HCT116 (cell line): ENCODE measurements at regions of chr2 and their contacts with region 1.

Region 1: GRCh38 chr2:106104332-106105062 is 89.6 kb downstream of the UXS1 start:
- DNase-seq: peak; percentile 44
- ATAC-seq: peak; percentile 93
- H3K4me3 ChIP-seq: no peak overlapping the region
- H3K27ac ChIP-seq: no peak overlapping the region
- H3K4me1 ChIP-seq: peaks cover 0 to 7% of the 10 kb centered on the region in 2 experiments; a peak in 1 of 4 replicates
- H3K27me3 ChIP-seq: no peaks in the 10 kb centered on the region
- CTCF ChIP-seq: peak; percentile 85 to 91 (median 91)
- POLR2A ChIP-seq: no peak
- RAD21 ChIP-seq: peak; percentile 95

Region 2: DNA sequence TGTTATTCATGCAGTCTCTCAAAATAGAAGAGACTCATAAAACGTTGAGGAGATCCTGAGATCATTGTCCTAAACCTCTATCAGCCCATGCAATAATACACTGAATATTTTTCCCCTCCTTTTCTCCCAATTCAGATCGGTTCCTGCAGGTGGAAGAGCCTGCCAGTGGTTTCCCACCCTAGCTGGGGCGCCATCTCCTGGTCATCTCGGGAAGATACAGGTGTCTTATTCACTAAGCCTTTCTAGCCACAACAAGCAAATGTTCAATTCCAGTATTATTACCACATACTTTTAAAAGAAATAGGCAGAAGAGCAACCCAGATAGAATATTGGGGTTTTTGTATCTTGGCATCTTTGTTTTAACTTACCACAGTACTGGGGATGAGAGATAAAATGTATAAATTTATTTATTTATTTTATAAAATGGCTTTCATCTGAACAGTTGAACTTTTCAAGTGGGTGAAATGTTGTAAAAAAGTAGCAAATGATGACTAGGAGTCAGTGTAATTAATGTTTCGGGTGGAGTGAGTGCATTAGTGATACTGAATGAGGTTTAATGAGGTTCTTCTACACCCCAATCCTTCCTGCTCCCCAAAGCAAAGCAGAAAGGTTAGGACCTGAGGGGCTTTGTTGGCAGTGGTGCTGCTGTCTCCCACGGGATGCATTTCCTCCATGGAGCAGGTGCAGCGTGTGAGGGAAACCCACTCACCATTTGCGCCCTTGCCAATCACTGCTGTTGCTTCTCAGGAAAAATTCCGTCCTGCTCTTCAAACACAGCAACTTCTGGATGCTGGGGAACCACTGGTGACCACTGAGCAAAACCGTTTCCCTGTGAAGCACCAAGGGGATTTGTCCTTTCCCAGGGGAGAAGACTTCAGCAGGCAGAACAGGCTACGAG is 558.5 kb before region 1 on chr2:
- CTCF ChIA-PET with region 1: no interaction called
- POLR2A ChIA-PET with region 1: no interaction called
- RAD21 ChIA-PET with region 1: no interaction called
- intact Hi-C with region 1: no loop called
- DNase-seq: peak; percentile 46
- ATAC-seq: peak; percentile 90
- H3K4me3 ChIP-seq: no peak overlapping the region
- H3K27ac ChIP-seq: no peak overlapping the region
- H3K4me1 ChIP-seq: peaks cover 0 to 8% of the 10 kb centered on the region in 2 experiments; a peak in 1 of 4 replicates
- H3K27me3 ChIP-seq: no peaks in the 10 kb centered on the region; the same call in 1 of the 2 replicates
- CTCF ChIP-seq: peak; percentile 79 to 92 (median 83)
- POLR2A ChIP-seq: no peak
- RAD21 ChIP-seq: peak; percentile 73

Region 3: DNA sequence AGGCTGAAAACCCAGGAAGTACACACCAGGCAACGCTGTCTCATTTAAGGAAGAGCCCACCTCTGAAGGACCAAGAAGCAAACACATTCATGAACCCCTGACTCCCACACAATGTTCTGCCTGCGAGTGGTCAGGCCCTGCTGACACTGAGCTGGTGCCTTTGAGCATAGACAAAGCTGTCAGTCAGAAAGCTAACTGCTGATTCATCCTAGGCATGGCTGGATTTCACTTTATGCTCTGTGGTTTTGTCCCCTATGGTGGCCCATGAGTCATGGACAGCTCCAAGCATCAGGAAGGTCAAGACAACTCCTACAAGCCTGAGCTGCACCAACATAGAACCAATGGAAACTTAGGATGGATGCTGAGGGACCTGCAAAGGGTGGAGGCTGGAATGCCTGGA is 10.8 kb after region 1 on chr2:
- CTCF ChIA-PET with region 1: no interaction called
- POLR2A ChIA-PET with region 1: no interaction called
- RAD21 ChIA-PET with region 1: no interaction called
- intact Hi-C with region 1: no loop called
- DNase-seq: peak; percentile 86
- ATAC-seq: peak; percentile 92
- H3K4me3 ChIP-seq: peak overlapping the region in 1 of 2 experiments; percentile 20; a peak in 1 of 4 replicates
- H3K27ac ChIP-seq: peak overlapping the region; percentile 32; the same call in 1 of the 2 replicates
- H3K4me1 ChIP-seq: peaks cover 15 to 54% of the 10 kb centered on the region in 2 experiments
- H3K27me3 ChIP-seq: no peaks in the 10 kb centered on the region
- CTCF ChIP-seq: no peak
- POLR2A ChIP-seq: no peak
- RAD21 ChIP-seq: no peak; the same call in 1 of the 2 replicates

Region 4: DNA sequence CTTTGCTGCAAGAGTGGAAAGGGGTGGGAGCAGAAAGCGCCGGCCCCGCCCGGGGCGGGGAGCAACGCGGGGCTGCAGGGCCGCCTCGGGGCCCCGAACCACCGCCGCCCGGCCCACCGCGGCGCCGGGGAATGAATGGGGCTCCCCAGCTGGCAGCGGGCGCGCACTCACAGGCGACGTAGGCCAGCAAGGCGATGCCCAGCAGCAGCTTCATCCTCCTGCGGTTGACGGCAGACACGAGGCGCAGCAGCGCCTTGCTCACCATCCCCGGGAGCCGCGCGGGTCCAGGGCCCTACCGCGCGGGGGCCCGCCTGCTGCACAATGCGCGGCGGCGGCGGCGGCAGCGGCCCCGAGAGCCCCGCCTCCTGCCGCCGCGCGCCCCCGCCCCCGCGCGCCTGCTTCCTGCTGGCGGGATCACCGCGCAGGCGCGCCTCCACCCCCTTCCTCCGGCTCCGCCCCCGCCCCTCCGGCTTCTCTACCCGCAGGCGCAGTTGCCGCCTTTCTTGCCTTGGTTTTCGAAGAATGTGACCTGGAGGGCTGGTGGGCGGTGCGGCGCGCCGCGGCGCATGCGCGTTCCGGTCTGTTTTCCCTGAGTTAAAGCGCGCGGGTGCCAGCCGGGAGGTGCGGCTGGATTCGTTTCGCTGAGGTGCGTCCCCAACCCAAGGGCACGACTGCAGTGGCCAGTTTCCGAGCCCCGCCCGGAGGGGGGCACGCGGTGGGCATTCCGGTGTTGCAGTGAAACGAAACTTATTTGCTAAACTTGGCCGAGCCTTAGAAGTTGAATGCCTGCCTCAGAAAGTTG is 89.7 kb after region 1 on chr2 and contains the start of gene UXS1:
- CTCF ChIA-PET with region 1: no interaction called
- POLR2A ChIA-PET with region 1: no interaction called
- RAD21 ChIA-PET with region 1: no interaction called
- intact Hi-C with region 1: loop called (anchors 2 kb)
- DNase-seq: peak; percentile 93
- ATAC-seq: peak; percentile 82
- H3K4me3 ChIP-seq: peak within 1 kb of the TSS; percentile 72 to 89
- H3K27ac ChIP-seq: peak within 1 kb of the TSS; percentile 80
- H3K4me1 ChIP-seq: peaks cover 4 to 17% of the 10 kb centered on the region in 2 experiments; a peak in 3 of 4 replicates
- H3K27me3 ChIP-seq: no peaks in the 10 kb centered on the region
- CTCF ChIP-seq: no peak
- POLR2A ChIP-seq: peak; percentile 56
- RAD21 ChIP-seq: no peak
- total RNA-seq, gene UXS1: 45.7 TPM

Region 5: GRCh38 chr2:106257830-106258229 is 153.3 kb after region 1 on chr2:
- CTCF ChIA-PET with region 1: no interaction called
- POLR2A ChIA-PET with region 1: no interaction called
- RAD21 ChIA-PET with region 1: no interaction called
- intact Hi-C with region 1: loop called (anchors 10 kb)
- DNase-seq: no peak
- ATAC-seq: no peak
- H3K4me3 ChIP-seq: no peak overlapping the region
- H3K27ac ChIP-seq: no peak overlapping the region
- H3K4me1 ChIP-seq: no peaks in the 10 kb centered on the region
- H3K27me3 ChIP-seq: no peaks in the 10 kb centered on the region
- CTCF ChIP-seq: no peak
- POLR2A ChIP-seq: no peak
- RAD21 ChIP-seq: no peak

Region 6: GRCh38 chr2:106542811-106543259 is 438.3 kb after region 1 on chr2:
- CTCF ChIA-PET with region 1: interaction called, 22 read pairs
- POLR2A ChIA-PET with region 1: no interaction called
- RAD21 ChIA-PET with region 1: interaction called, 3 to 4 read pairs
- intact Hi-C with region 1: loop called (anchors 1 kb)
- DNase-seq: peak; percentile 55
- ATAC-seq: peak; percentile 97
- H3K4me3 ChIP-seq: peak overlapping the region; percentile 38 to 55
- H3K27ac ChIP-seq: peak overlapping the region; percentile 46; the same call in 1 of the 2 replicates
- H3K4me1 ChIP-seq: peaks cover 0 to 4% of the 10 kb centered on the region in 2 experiments; a peak in 1 of 4 replicates
- H3K27me3 ChIP-seq: no peaks in the 10 kb centered on the region
- CTCF ChIP-seq: peak; percentile 74 to 87 (median 79); a peak in 5 of 6 replicates
- POLR2A ChIP-seq: no peak
- RAD21 ChIP-seq: peak; percentile 85